ENCODE measurements at regions of chrX and their contacts with region 1.

Region 1: DNA sequence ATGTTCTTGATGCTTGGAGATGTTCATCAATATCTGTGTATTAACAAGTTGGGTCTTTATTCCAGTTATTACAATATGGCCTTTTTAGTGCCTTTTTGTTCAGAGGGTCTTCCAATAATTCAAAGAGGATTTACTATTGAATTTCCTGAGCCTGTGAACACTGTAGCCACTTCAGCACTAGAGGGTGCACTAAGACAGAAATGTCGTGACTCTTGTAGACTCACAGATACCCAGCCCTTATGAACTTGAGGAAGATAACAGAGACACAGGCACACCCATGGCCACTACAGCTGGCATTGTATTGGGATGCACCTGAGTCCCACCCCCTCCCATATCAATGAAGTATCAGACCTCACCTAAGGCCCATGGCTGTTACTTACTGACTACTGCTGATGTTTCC is 54.4 kb upstream of the ACTRT1 start:
- DNase-seq: no peak
- ATAC-seq: peak; percentile 68
- H3K4me3 ChIP-seq: no peak overlapping the region
- H3K27ac ChIP-seq: no peak overlapping the region
- H3K4me1 ChIP-seq: no peaks in the 10 kb centered on the region
- H3K27me3 ChIP-seq: no peaks in the 10 kb centered on the region
- CTCF ChIP-seq: peak; percentile 18 to 37 (median 26); a peak in 4 of 6 replicates
- EP300 ChIP-seq: no peak
- POLR2A ChIP-seq: no peak
- RAD21 ChIP-seq: peak; percentile 46

Region 2: DNA sequence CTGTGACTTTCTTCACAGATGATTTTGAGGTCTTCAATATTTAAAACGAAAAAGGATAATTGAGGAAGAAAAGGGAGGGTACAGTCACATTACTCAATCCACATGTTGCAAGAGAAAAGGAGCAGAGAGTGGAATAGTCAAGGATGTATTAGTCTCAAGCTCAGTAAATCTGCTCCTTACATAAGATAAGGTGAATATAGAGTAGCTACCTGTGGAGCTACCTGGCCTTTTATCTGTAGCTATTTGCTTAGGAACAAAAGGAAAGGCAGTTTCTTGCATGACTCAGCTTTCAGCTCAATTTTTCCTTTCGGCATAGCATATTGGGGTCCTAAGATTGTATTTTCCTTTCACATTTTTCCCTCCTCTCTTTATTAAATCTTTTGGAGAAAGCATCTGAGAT is 28.1 kb before region 1 on chrX:
- CTCF ChIA-PET with region 1: no interaction called
- POLR2A ChIA-PET with region 1: no interaction called
- RAD21 ChIA-PET with region 1: no interaction called
- SMC1A ChIA-PET with region 1: no interaction called
- in situ Hi-C with region 1: no loop called
- intact Hi-C with region 1: no loop called
- DNase-seq: no peak
- ATAC-seq: no peak
- H3K4me3 ChIP-seq: no peak overlapping the region
- H3K27ac ChIP-seq: no peak overlapping the region
- H3K4me1 ChIP-seq: no peaks in the 10 kb centered on the region
- H3K27me3 ChIP-seq: no peaks in the 10 kb centered on the region
- CTCF ChIP-seq: no peak
- EP300 ChIP-seq: no peak
- POLR2A ChIP-seq: no peak
- RAD21 ChIP-seq: no peak

Region 3: GRCh38 chrX:128518508-128518907 is 411.9 kb after region 1 on chrX:
- CTCF ChIA-PET with region 1: interaction called, 3 read pairs
- POLR2A ChIA-PET with region 1: no interaction called
- RAD21 ChIA-PET with region 1: no interaction called
- SMC1A ChIA-PET with region 1: no interaction called
- in situ Hi-C with region 1: no loop called
- intact Hi-C with region 1: loop called (anchors 2 kb)
- DNase-seq: no peak
- ATAC-seq: peak; percentile 65
- H3K4me3 ChIP-seq: no peak overlapping the region
- H3K27ac ChIP-seq: no peak overlapping the region
- H3K4me1 ChIP-seq: no peaks in the 10 kb centered on the region
- H3K27me3 ChIP-seq: no peaks in the 10 kb centered on the region
- CTCF ChIP-seq: peak; percentile 35 to 43 (median 39); a peak in 4 of 6 replicates
- EP300 ChIP-seq: no peak
- POLR2A ChIP-seq: no peak
- RAD21 ChIP-seq: peak; percentile 50

Region 4: DNA sequence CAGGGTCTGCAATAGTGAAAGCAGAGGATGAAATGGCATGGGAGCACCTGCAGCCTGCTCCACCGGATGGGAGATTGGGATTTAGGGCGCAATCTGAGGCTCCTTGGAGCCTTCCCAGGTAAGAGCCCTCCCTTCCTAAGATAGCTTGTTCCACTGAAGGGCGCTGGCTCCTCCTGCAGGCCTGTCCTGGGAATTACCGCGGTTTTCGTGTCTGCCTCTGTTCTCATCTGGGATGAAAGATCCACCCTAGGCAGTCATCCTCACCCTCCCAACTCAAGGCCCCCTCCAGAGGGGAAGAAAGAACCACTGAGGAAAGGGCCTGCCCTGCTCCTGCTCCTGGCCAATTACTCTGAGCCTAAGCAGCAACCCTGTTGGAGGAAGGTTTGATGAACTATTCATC is 869.1 kb after region 1 on chrX:
- CTCF ChIA-PET with region 1: interaction called, 6 read pairs
- POLR2A ChIA-PET with region 1: no interaction called
- RAD21 ChIA-PET with region 1: no interaction called
- SMC1A ChIA-PET with region 1: no interaction called
- in situ Hi-C with region 1: no loop called
- intact Hi-C with region 1: loop called (anchors 10 kb)
- DNase-seq: no peak
- ATAC-seq: peak; percentile 74
- H3K4me3 ChIP-seq: no peak overlapping the region
- H3K27ac ChIP-seq: no peak overlapping the region
- H3K4me1 ChIP-seq: no peaks in the 10 kb centered on the region
- H3K27me3 ChIP-seq: no peaks in the 10 kb centered on the region
- CTCF ChIP-seq: peak; percentile 66 to 77 (median 75)
- EP300 ChIP-seq: no peak
- POLR2A ChIP-seq: no peak
- RAD21 ChIP-seq: peak; percentile 72